Breast epithelium (tissue), 4 donors: ENCODE measurements at regions of chr14 and their contacts with region 1.

Region 1: GRCh38 chr14:48243900-48244299 is 568.5 kb upstream of the MDGA2 start:
- DNase-seq: no peak
- H3K4me3 ChIP-seq: no peak overlapping the region
- H3K27ac ChIP-seq: no peak overlapping the region
- H3K4me1 ChIP-seq: no peaks in the 10 kb centered on the region
- H3K27me3 ChIP-seq: no peaks in the 10 kb centered on the region
- CTCF ChIP-seq: no peak
- POLR2A ChIP-seq: no peak

Region 2: GRCh38 chr14:48229091-48229490 is 14.8 kb before region 1 on chr14:
- intact Hi-C with region 1: loop called (anchors 1 kb)
- DNase-seq: no peak
- H3K4me3 ChIP-seq: no peak overlapping the region
- H3K27ac ChIP-seq: no peak overlapping the region
- H3K4me1 ChIP-seq: no peaks in the 10 kb centered on the region
- H3K27me3 ChIP-seq: no peaks in the 10 kb centered on the region
- CTCF ChIP-seq: no peak
- POLR2A ChIP-seq: no peak